ENCODE measurements at regions of chr10 and their contacts with region 1.

Region 1: DNA sequence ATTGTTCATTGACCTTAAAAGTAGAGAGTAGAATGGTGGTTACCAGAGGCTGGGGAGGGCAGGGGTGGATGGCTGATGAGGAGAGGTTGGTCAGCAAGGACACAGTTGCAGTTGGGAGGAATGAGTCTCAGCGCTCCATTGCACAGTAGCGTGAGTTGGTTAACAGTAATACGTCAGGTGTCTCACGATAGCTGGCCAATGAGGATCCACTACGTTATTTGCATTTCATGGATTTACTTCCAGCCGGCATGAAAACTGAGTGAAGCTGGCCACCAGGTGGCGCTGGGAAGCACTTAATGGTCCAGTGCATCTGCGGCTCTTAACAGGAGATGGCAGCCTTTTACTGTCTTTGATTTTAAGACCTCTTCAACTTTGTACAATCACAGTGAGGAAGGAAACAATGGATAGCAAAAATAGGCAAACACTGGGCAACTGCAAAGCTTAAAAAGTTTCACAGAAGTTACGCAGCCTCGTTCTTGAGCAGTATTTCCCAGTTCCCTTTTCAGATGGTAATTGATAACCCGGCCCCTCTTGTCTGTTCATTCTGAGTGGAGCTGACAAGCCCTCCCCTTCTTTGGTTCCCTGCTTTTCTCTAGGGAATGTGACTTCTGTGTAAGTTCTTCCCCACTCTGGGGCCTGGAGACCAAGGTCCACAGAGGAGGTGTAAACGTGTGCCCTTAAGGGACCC is 23.7 kb downstream of the AKR1E2 start:
- DNase-seq: peak; percentile 59 to 87 (median 81)
- ATAC-seq: peak; percentile 92
- H3K4me3 ChIP-seq: no peak overlapping the region
- H3K4me3 Mint-ChIP-seq: no peak overlapping the region
- H3K27ac ChIP-seq: no peak overlapping the region
- H3K27ac Mint-ChIP-seq: no peak overlapping the region
- H3K4me1 ChIP-seq: no peaks in the 10 kb centered on the region
- H3K4me1 Mint-ChIP-seq: peaks cover 7% of the 10 kb centered on the region
- H3K27me3 ChIP-seq: no peaks in the 10 kb centered on the region
- H3K27me3 Mint-ChIP-seq: no peaks in the 10 kb centered on the region
- CTCF ChIP-seq: peak; percentile 98

Region 2: GRCh38 chr10:4825851-4826665 is 23.6 kb before region 1 on chr10 and contains the start of gene AKR1E2:
- CTCF ChIA-PET with region 1: interaction called, 16 read pairs
- POLR2A ChIA-PET with region 1: no interaction called
- intact Hi-C with region 1: no loop called
- DNase-seq: peak; percentile 14 to 81 (median 64)
- ATAC-seq: peak; percentile 88
- H3K4me3 ChIP-seq: peak within 1 kb of the TSS; percentile 28 to 29
- H3K4me3 Mint-ChIP-seq: peak within 1 kb of the TSS; percentile 66
- H3K27ac ChIP-seq: no peak within 1 kb of the TSS
- H3K27ac Mint-ChIP-seq: no peak within 1 kb of the TSS
- H3K4me1 ChIP-seq: no peaks in the 10 kb centered on the region
- H3K4me1 Mint-ChIP-seq: peaks cover 8% of the 10 kb centered on the region
- H3K27me3 ChIP-seq: peaks cover 0 to 12% of the 10 kb centered on the region in 2 experiments
- H3K27me3 Mint-ChIP-seq: peaks cover 46% of the 10 kb centered on the region
- CTCF ChIP-seq: no peak
- total RNA-seq, gene AKR1E2: 5.2 to 5.7 TPM

Region 3: GRCh38 chr10:4865945-4866661 is 16.4 kb after region 1 on chr10:
- CTCF ChIA-PET with region 1: interaction called, 12 read pairs
- POLR2A ChIA-PET with region 1: no interaction called
- intact Hi-C with region 1: no loop called
- DNase-seq: no peak
- ATAC-seq: no peak
- H3K4me3 ChIP-seq: no peak overlapping the region
- H3K4me3 Mint-ChIP-seq: no peak overlapping the region
- H3K27ac ChIP-seq: no peak overlapping the region
- H3K27ac Mint-ChIP-seq: no peak overlapping the region
- H3K4me1 ChIP-seq: no peaks in the 10 kb centered on the region
- H3K4me1 Mint-ChIP-seq: peaks cover 2% of the 10 kb centered on the region
- H3K27me3 ChIP-seq: no peaks in the 10 kb centered on the region
- H3K27me3 Mint-ChIP-seq: no peaks in the 10 kb centered on the region
- CTCF ChIP-seq: no peak

Region 4: DNA sequence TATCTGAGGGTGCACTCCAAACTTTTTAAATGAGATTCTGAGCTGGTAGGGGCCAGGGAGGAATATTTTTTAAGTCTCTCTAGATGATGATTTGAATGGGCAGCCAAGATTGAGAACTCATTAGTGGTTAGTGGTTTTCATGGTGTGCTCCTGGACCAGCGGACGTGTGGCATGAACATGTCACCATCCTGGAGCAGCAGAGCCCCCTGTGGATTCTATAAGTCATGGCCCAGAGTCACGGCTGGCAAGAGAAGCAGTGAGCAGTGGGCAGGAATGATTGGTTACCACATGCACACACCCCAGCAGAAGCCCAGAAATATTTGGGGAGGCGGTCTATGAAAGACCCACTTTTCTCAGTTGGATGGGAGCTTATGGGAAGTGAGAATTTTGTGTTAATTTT is 493.9 kb after region 1 on chr10:
- CTCF ChIA-PET with region 1: interaction called, 13 read pairs
- POLR2A ChIA-PET with region 1: no interaction called
- intact Hi-C with region 1: no loop called
- DNase-seq: peak in 2 of 9 experiments; percentile 33 to 38
- ATAC-seq: no peak
- H3K4me3 ChIP-seq: no peak overlapping the region
- H3K4me3 Mint-ChIP-seq: no peak overlapping the region
- H3K27ac ChIP-seq: no peak overlapping the region
- H3K27ac Mint-ChIP-seq: no peak overlapping the region
- H3K4me1 ChIP-seq: no peaks in the 10 kb centered on the region
- H3K4me1 Mint-ChIP-seq: no peaks in the 10 kb centered on the region
- H3K27me3 ChIP-seq: no peaks in the 10 kb centered on the region
- H3K27me3 Mint-ChIP-seq: peaks cover 2% of the 10 kb centered on the region
- CTCF ChIP-seq: no peak

Region 5: GRCh38 chr10:5434017-5434753 is 584.5 kb after region 1 on chr10:
- CTCF ChIA-PET with region 1: interaction called, 58 read pairs
- POLR2A ChIA-PET with region 1: no interaction called
- intact Hi-C with region 1: loop called (anchors 1 kb)
- DNase-seq: peak in 2 of 9 experiments; percentile 46 to 57
- ATAC-seq: peak; percentile 58
- H3K4me3 ChIP-seq: no peak overlapping the region
- H3K4me3 Mint-ChIP-seq: no peak overlapping the region
- H3K27ac ChIP-seq: no peak overlapping the region
- H3K27ac Mint-ChIP-seq: peak overlapping the region; percentile 49
- H3K4me1 ChIP-seq: peaks cover 5% of the 10 kb centered on the region
- H3K4me1 Mint-ChIP-seq: peaks cover 12% of the 10 kb centered on the region
- H3K27me3 ChIP-seq: no peaks in the 10 kb centered on the region
- H3K27me3 Mint-ChIP-seq: no peaks in the 10 kb centered on the region
- CTCF ChIP-seq: peak; percentile 69

Region 6: DNA sequence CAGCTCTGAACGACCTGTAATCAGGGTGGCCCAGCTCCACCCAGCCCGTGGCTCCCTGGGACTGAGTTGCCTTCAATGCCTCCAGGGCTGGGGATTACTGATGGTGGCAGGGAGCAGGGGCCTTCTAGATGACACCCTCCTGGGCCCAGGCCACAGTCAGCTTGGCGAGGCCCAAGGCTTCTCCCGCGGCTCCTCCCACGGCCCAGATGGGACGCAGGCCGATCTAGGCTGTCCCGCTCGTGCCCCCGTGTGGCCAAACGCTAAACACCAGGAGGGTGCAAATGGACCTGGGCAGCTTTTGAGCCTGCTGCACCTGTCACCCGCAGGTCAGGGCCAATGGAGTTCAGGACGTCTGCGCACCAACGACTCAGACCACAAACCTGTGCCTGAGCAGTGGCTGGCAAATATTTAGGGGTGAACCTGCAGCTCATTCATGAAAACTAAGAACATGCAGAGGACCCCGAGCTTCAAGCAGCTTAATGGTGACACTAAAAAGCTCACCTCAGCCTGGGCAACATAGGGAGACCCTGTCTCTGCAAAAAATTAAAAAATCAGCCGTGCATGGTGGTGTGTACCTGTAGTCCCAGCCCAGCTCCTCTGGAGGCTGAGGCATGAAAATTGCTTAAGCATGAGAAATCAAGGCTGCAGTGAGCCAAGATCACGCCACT is 773.5 kb after region 1 on chr10:
- CTCF ChIA-PET with region 1: interaction called, 25 read pairs
- POLR2A ChIA-PET with region 1: no interaction called
- intact Hi-C with region 1: loop called (anchors 1 to 5 kb)
- DNase-seq: peak; percentile 50 to 84 (median 77)
- ATAC-seq: peak; percentile 98
- H3K4me3 ChIP-seq: no peak overlapping the region
- H3K4me3 Mint-ChIP-seq: no peak overlapping the region
- H3K27ac ChIP-seq: no peak overlapping the region
- H3K27ac Mint-ChIP-seq: no peak overlapping the region
- H3K4me1 ChIP-seq: peaks cover 4% of the 10 kb centered on the region
- H3K4me1 Mint-ChIP-seq: no peaks in the 10 kb centered on the region
- H3K27me3 ChIP-seq: no peaks in the 10 kb centered on the region
- H3K27me3 Mint-ChIP-seq: no peaks in the 10 kb centered on the region
- CTCF ChIP-seq: peak; percentile 85

Measured in CD8-positive, alpha-beta T cell (primary cell).